IMR-90 (cell line): ENCODE measurements at regions of chr6 and their contacts with region 1.

Region 1: DNA sequence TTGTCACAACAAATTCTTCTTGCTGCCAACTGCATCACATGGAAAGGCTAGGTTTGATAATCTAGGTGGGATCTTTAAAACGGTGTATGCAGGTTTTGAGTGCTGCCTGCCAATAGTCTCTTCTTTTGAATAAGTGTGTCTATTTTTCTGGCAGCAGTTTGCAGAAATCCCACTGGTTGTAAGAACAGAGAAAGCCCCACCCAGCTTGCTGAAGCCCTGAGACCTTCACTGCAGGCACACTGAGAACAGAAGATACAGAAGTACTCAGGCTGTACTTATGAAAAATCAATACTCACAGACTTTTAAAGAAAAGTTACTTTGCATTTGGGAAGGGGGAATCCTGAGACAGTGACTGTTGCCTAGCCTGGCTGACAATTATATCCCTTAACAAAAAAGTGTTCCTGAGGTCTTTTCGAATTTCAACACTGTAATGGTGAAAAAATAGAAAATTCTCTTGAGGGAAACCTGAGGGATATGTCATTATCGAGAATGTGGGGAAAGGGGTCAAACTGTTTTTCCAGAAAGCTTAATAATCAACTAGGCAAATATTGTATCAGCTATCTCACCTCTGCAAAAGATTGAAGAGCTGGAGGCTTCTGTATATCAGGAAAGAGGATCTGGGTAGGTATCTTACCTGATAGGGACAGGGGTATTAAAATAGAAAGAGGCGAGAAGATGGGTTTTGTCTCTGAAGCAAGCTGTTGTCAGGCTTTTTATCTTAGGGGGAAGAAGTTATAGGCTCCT is 199.9 kb downstream of the LRFN2 start:
- DNase-seq: no peak
- ATAC-seq: no peak
- H3K4me3 ChIP-seq: no peak overlapping the region
- H3K27ac ChIP-seq: no peak overlapping the region
- H3K4me1 ChIP-seq: no peaks in the 10 kb centered on the region
- H3K27me3 ChIP-seq: no peaks in the 10 kb centered on the region
- CTCF ChIP-seq: no peak
- POLR2A ChIP-seq: no peak
- RAD21 ChIP-seq: no peak

Region 2: GRCh38 chr6:38818691-38819090 is 1568.6 kb before region 1 on chr6:
- CTCF ChIA-PET with region 1: no interaction called
- POLR2A ChIA-PET with region 1: no interaction called
- dilution Hi-C with region 1: no loop called
- in situ Hi-C with region 1: no loop called
- intact Hi-C with region 1: loop called (anchors 5 kb)
- DNase-seq: no peak
- ATAC-seq: no peak
- H3K4me3 ChIP-seq: no peak overlapping the region
- H3K27ac ChIP-seq: no peak overlapping the region
- H3K4me1 ChIP-seq: no peaks in the 10 kb centered on the region
- H3K27me3 ChIP-seq: no peaks in the 10 kb centered on the region
- CTCF ChIP-seq: no peak
- POLR2A ChIP-seq: no peak
- RAD21 ChIP-seq: no peak